PC-3 (cell line): ENCODE measurements at regions of chr4 and their contacts with region 1.

Region 1: DNA sequence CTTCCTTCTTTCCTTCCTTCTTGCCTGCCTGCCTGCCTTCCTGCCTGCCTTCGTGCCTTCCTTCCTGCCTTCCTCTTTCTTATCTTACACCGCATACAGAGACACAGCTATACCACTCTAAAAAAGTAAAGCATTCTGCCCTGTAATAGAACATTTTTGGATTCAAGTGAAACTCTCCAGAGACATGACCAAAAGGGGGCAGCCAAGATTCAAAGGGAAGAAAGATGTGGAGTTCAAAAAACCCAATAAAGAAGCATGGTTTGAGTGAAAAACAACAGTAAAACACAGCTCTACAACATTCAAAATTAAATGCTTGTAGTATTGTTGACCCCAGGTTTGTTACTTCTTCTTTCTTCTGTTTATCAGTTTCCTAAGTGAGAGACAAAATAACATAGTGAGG is 914.9 kb upstream of the PCDH7 start:
- DNase-seq: peak; percentile 52
- ATAC-seq: no peak
- H3K4me3 ChIP-seq: no peak overlapping the region
- H3K27ac ChIP-seq: no peak overlapping the region
- H3K4me1 ChIP-seq: no peaks in the 10 kb centered on the region
- H3K27me3 ChIP-seq: no peaks in the 10 kb centered on the region
- CTCF ChIP-seq: peak; percentile 62

Region 2: GRCh38 chr4:29538889-29539646 is 266.2 kb before region 1 on chr4:
- CTCF ChIA-PET with region 1: no interaction called
- POLR2A ChIA-PET with region 1: no interaction called
- intact Hi-C with region 1: no loop called
- DNase-seq: no peak
- ATAC-seq: no peak
- H3K4me3 ChIP-seq: no peak overlapping the region
- H3K27ac ChIP-seq: no peak overlapping the region
- H3K4me1 ChIP-seq: no peaks in the 10 kb centered on the region
- H3K27me3 ChIP-seq: no peaks in the 10 kb centered on the region
- CTCF ChIP-seq: no peak

Region 3: GRCh38 chr4:29588617-29589016 is 216.6 kb before region 1 on chr4:
- CTCF ChIA-PET with region 1: no interaction called
- POLR2A ChIA-PET with region 1: no interaction called
- intact Hi-C with region 1: no loop called
- DNase-seq: peak; percentile 75
- ATAC-seq: peak; percentile 99
- H3K4me3 ChIP-seq: no peak overlapping the region
- H3K27ac ChIP-seq: peak overlapping the region; percentile 81
- H3K4me1 ChIP-seq: peaks cover 6% of the 10 kb centered on the region
- H3K27me3 ChIP-seq: no peaks in the 10 kb centered on the region
- CTCF ChIP-seq: no peak

Region 4: GRCh38 chr4:29734343-29735213 is 70.7 kb before region 1 on chr4:
- CTCF ChIA-PET with region 1: no interaction called
- POLR2A ChIA-PET with region 1: no interaction called
- intact Hi-C with region 1: no loop called
- DNase-seq: peak; percentile 34
- ATAC-seq: peak; percentile 60
- H3K4me3 ChIP-seq: no peak overlapping the region
- H3K27ac ChIP-seq: no peak overlapping the region
- H3K4me1 ChIP-seq: no peaks in the 10 kb centered on the region
- H3K27me3 ChIP-seq: no peaks in the 10 kb centered on the region
- CTCF ChIP-seq: no peak

Region 5: GRCh38 chr4:29948451-29948850 is 143.2 kb after region 1 on chr4:
- CTCF ChIA-PET with region 1: no interaction called
- POLR2A ChIA-PET with region 1: no interaction called
- intact Hi-C with region 1: loop called (anchors 10 kb)
- DNase-seq: no peak
- ATAC-seq: peak; percentile 31; the same call in 1 of the 2 replicates
- H3K4me3 ChIP-seq: no peak overlapping the region
- H3K27ac ChIP-seq: 0 out of 2 replicates have a peak overlapping the region, but pooled peaks have one; percentile 18
- H3K4me1 ChIP-seq: no peaks in the 10 kb centered on the region
- H3K27me3 ChIP-seq: no peaks in the 10 kb centered on the region
- CTCF ChIP-seq: no peak